GM12878 (cell line): ENCODE measurements at regions of chr12 and their contacts with region 1.

Region 1: DNA sequence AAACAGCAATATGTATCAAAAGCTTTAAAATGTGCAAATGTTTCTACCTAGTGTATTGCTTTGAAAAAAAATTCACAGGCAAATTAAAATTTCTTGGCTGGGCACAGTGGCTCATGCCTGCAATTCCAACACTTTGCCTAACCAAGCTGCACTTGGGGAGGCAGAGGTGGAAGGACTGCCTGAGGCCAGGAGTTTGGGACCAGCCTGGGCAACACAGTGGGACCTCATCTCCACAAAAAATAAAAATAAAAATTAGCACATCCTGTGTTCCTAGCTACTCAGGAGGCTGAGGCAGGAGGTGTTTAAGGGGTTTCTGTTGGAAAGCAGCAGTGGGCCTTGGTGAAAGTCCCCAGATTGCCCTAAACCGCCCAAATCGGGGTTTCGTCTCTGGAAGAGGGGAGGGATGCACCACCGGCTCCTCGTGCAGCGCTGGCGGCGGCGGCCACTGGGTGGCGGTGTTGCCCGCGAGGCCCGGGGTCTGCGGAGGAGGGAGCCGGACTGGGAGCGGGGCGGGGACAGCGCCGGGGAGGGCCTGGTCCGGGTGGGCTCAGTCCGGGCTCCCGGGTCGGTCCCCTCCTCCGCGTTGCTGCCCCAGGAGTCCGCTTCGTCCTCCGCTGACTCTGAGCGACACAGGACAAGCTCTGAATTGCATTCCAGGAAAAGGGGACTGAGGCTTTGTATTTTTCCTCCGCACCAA is 265.6 kb downstream of the AACS start:
- DNase-seq: no peak
- ATAC-seq: peak; percentile 99
- H3K4me3 ChIP-seq: no peak overlapping the region
- H3K27ac ChIP-seq: no peak overlapping the region
- H3K4me1 ChIP-seq: no peaks in the 10 kb centered on the region
- H3K27me3 ChIP-seq: no peaks in the 10 kb centered on the region; a peak in 2 of 4 replicates
- CTCF ChIP-seq: peak; percentile 76 to 90 (median 82)
- EP300 ChIP-seq: no peak
- POLR2A ChIP-seq: no peak
- RAD21 ChIP-seq: peak; percentile 85

Region 2: GRCh38 chr12:125070661-125071350 is 260.0 kb before region 1 on chr12:
- CTCF ChIA-PET with region 1: no interaction called
- POLR2A ChIA-PET with region 1: interaction called, 10 read pairs
- RAD21 ChIA-PET with region 1: no interaction called
- SMC1A ChIA-PET with region 1: no interaction called
- in situ Hi-C with region 1: no loop called
- intact Hi-C with region 1: no loop called
- DNase-seq: no peak
- ATAC-seq: peak; percentile 17; the same call in 1 of the 3 replicates
- H3K4me3 ChIP-seq: no peak overlapping the region
- H3K27ac ChIP-seq: no peak overlapping the region
- H3K4me1 ChIP-seq: no peaks in the 10 kb centered on the region; the same call in 1 of the 2 replicates
- H3K27me3 ChIP-seq: no peaks in the 10 kb centered on the region
- CTCF ChIP-seq: no peak
- EP300 ChIP-seq: no peak
- POLR2A ChIP-seq: no peak
- RAD21 ChIP-seq: no peak

Region 3: DNA sequence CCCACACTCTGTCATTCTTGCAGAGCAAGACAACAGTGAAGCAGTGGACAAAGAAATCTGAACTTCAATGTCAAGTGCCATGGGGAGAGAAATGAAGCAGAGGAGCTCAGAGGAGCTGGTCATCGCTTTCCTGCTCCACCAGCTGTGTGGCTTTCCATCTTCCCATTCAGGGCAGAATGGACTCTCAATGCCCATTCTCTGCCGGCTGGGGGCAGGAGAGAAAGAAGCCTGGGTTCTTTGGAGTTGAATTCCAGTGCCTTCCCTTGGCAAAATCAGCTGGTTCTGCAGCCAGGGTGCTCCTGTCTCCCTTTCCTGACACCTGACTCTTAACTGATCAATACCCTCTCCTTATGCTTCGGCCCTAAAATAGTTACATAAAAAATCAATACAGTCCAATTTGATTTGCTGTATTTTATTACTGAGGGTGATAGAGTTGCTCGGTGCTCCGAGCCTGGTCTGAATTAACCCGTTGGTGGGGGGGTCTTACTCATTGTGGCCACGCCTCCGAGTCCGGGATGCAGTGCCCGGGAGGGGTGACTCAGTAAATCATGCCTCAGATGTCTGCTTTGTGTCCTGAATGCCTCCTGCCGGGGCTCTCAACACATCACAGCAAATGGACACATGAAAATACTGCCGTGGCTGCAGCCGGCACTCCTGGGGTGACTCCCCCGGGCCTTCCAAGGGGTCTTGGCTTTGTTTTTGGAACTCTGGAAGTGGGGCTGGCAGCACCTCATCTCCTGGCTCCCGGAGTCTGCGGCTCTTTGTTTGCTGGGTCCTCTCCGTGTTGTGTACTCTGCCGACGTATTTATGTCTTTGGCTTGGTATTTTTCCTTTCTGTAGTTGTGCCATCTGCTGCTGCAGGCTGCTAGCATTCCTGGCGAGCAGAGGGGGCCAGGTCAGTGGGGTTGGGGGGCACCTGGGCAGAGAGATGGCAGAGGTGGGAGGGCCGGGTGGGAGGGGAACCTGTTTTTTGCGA is 136.7 kb before region 1 on chr12:
- CTCF ChIA-PET with region 1: no interaction called
- POLR2A ChIA-PET with region 1: no interaction called
- RAD21 ChIA-PET with region 1: no interaction called
- SMC1A ChIA-PET with region 1: no interaction called
- in situ Hi-C with region 1: no loop called
- intact Hi-C with region 1: no loop called
- DNase-seq: no peak
- ATAC-seq: no peak
- H3K4me3 ChIP-seq: no peak overlapping the region
- H3K27ac ChIP-seq: no peak overlapping the region
- H3K4me1 ChIP-seq: no peaks in the 10 kb centered on the region
- H3K27me3 ChIP-seq: peaks cover 0 to 7% of the 10 kb centered on the region in 2 experiments; a peak in 2 of 4 replicates
- CTCF ChIP-seq: no peak
- EP300 ChIP-seq: no peak
- POLR2A ChIP-seq: no peak
- RAD21 ChIP-seq: no peak

Region 4: DNA sequence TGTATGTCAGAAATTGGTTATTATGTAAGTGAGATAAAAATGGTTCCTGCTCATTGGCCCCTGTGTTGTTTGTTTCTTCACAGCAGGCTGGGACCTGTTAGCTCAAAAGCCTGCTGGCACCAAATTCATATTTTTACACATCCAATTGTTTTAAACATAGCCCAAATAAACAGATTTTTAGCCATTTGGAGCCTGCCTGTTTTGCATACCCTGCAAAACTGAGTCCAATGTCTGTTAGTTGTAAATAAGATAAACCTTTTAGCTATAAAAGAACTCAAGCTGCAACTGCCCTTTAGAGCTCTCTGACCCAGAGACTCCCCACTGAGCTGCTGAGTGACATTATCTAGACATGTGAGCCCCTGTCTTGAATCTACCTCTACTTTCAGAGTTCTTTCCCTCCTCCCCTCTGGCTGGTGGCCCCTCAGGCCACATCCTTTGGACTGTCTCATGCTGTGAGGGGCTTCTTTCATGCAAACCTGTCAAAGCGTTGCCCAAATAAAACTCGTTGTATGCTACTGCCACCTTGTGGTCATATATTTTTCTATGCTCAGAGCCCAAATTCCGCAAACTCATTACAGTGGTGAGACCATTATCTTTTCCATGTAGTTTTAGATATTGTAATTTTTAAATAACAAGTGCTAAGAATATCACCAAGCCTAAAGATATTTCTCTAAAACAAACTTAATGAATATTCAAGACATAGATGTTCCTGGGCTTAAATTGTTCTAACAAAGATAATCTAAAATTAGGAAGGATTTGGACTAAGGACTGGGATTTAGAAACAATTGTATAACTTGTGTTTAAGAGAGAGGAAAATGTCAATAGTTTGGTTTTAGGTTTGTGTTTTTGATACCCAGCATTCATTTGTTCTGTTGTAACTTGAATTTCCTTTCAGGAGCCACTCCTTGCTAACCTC is 72.3 kb after region 1 on chr12:
- CTCF ChIA-PET with region 1: interaction called, 85 read pairs
- POLR2A ChIA-PET with region 1: no interaction called
- RAD21 ChIA-PET with region 1: interaction called, 29 read pairs
- SMC1A ChIA-PET with region 1: interaction called, 41 read pairs
- in situ Hi-C with region 1: no loop called
- intact Hi-C with region 1: loop called (anchors 1 kb)
- DNase-seq: no peak
- ATAC-seq: peak; percentile 62
- H3K4me3 ChIP-seq: no peak overlapping the region
- H3K27ac ChIP-seq: no peak overlapping the region
- H3K4me1 ChIP-seq: peaks cover 14% of the 10 kb centered on the region
- H3K27me3 ChIP-seq: peaks cover 0 to 6% of the 10 kb centered on the region in 2 experiments; a peak in 2 of 4 replicates
- CTCF ChIP-seq: peak; percentile 46 to 62 (median 55); a peak in 5 of 6 replicates
- EP300 ChIP-seq: no peak
- POLR2A ChIP-seq: no peak
- RAD21 ChIP-seq: peak; percentile 75

Region 5: GRCh38 chr12:125424909-125425308 is 94.1 kb after region 1 on chr12:
- CTCF ChIA-PET with region 1: no interaction called
- POLR2A ChIA-PET with region 1: no interaction called
- RAD21 ChIA-PET with region 1: no interaction called
- SMC1A ChIA-PET with region 1: no interaction called
- in situ Hi-C with region 1: no loop called
- intact Hi-C with region 1: no loop called
- DNase-seq: no peak
- ATAC-seq: 0 out of 3 replicates have a peak, but pooled peaks have one; percentile 40
- H3K4me3 ChIP-seq: no peak overlapping the region
- H3K27ac ChIP-seq: no peak overlapping the region
- H3K4me1 ChIP-seq: no peaks in the 10 kb centered on the region
- H3K27me3 ChIP-seq: no peaks in the 10 kb centered on the region
- CTCF ChIP-seq: no peak
- EP300 ChIP-seq: no peak
- POLR2A ChIP-seq: no peak
- RAD21 ChIP-seq: no peak

Region 6: GRCh38 chr12:125683748-125684381 is 353.1 kb after region 1 on chr12:
- CTCF ChIA-PET with region 1: interaction called, 4 read pairs
- POLR2A ChIA-PET with region 1: no interaction called
- RAD21 ChIA-PET with region 1: no interaction called
- SMC1A ChIA-PET with region 1: no interaction called
- in situ Hi-C with region 1: no loop called
- intact Hi-C with region 1: loop called (anchors 2 kb)
- DNase-seq: no peak
- ATAC-seq: peak; percentile 96
- H3K4me3 ChIP-seq: no peak overlapping the region
- H3K27ac ChIP-seq: no peak overlapping the region
- H3K4me1 ChIP-seq: no peaks in the 10 kb centered on the region
- H3K27me3 ChIP-seq: no peaks in the 10 kb centered on the region
- CTCF ChIP-seq: peak; percentile 59 to 76 (median 65)
- EP300 ChIP-seq: no peak
- POLR2A ChIP-seq: no peak
- RAD21 ChIP-seq: peak; percentile 62

Region 7: DNA sequence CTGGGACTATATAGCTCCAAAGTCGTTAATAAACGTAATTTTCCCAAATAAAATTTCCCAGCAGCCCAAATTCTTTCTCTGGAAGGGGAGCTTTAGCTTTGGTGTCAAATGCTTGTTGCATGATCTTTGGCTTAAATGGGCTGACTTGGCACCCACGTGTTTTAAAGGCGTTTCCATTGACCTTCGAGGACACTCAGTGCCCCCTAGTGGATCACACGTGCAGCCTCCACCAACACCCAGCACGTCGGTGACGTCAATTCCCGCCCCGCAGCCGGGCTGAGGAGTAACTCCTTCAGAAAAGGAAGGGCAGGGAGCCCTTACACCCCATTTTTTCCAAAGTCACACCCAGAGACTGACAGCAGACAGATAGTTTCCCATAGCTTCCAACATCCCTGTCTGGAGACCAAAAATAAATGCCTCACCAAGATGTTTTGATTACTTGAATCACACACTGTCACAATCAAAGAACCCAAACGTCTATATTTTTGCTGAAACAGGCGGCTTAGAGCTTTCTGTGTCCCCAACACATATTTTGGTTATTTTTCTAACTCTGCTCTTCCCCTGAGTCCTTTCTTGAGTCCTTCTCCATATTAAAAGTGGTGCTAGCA is 442.3 kb after region 1 on chr12:
- CTCF ChIA-PET with region 1: no interaction called
- POLR2A ChIA-PET with region 1: no interaction called
- RAD21 ChIA-PET with region 1: no interaction called
- SMC1A ChIA-PET with region 1: no interaction called
- in situ Hi-C with region 1: no loop called
- intact Hi-C with region 1: loop called (anchors 5 kb)
- DNase-seq: no peak
- ATAC-seq: peak; percentile 76
- H3K4me3 ChIP-seq: no peak overlapping the region
- H3K27ac ChIP-seq: no peak overlapping the region
- H3K4me1 ChIP-seq: no peaks in the 10 kb centered on the region
- H3K27me3 ChIP-seq: no peaks in the 10 kb centered on the region
- CTCF ChIP-seq: peak; percentile 46 to 52 (median 50); a peak in 5 of 6 replicates
- EP300 ChIP-seq: no peak
- POLR2A ChIP-seq: no peak
- RAD21 ChIP-seq: peak; percentile 47